ENCODE measurements at regions of chr13 and their contacts with region 1.

Region 1: GRCh38 chr13:106536244-106537034 is 977 bp upstream of the EFNB2 start:
- DNase-seq: peak; percentile 73
- H3K4me3 ChIP-seq: peak overlapping the region; percentile 61 to 65 (median 63)
- H3K27ac ChIP-seq: peak overlapping the region; percentile 45
- H3K4me1 ChIP-seq: peaks cover 11% of the 10 kb centered on the region
- H3K27me3 ChIP-seq: no peaks in the 10 kb centered on the region
- CTCF ChIP-seq: peak; percentile 93 to 99

Region 2: GRCh38 chr13:104571161-104571892 is 1965.1 kb before region 1 on chr13:
- CTCF ChIA-PET with region 1: no interaction called
- dilution Hi-C with region 1: no loop called
- in situ Hi-C with region 1: loop called (anchors 10 to 25 kb)
- intact Hi-C with region 1: loop called (anchors 1 kb)
- DNase-seq: peak; percentile 90
- H3K4me3 ChIP-seq: no peak overlapping the region
- H3K27ac ChIP-seq: no peak overlapping the region
- H3K4me1 ChIP-seq: peaks cover 12% of the 10 kb centered on the region
- H3K27me3 ChIP-seq: no peaks in the 10 kb centered on the region
- CTCF ChIP-seq: peak; percentile 54 to 82

Region 3: DNA sequence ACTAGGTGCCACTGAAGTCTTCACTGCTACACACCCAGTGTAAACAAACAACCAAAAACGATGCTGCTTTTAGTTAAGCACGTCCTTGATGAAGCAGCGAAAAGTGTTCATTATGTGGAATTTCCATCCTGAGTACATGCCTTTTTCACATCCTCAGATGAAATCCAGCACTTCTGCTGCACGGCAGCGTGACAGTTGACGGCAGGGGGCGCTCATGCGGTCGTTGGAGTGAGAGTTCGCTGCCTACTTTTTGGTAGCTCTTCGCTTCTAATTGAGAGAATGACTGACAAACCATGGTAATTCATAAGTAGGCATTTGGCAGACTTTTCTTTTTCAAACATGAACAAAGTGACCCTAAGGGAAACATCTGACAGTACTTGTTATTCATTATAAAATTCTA is 1125.8 kb before region 1 on chr13:
- CTCF ChIA-PET with region 1: no interaction called
- dilution Hi-C with region 1: no loop called
- in situ Hi-C with region 1: loop called in 1 of 2 experiments (anchors 25 kb)
- intact Hi-C with region 1: loop called (anchors 2 kb)
- DNase-seq: peak; percentile 53
- H3K4me3 ChIP-seq: no peak overlapping the region
- H3K27ac ChIP-seq: no peak overlapping the region
- H3K4me1 ChIP-seq: no peaks in the 10 kb centered on the region
- H3K27me3 ChIP-seq: no peaks in the 10 kb centered on the region
- CTCF ChIP-seq: peak; percentile 91

Region 4: GRCh38 chr13:105702441-105702840 is 834.0 kb before region 1 on chr13:
- CTCF ChIA-PET with region 1: no interaction called
- dilution Hi-C with region 1: no loop called
- in situ Hi-C with region 1: no loop called
- intact Hi-C with region 1: loop called (anchors 10 kb)
- DNase-seq: no peak
- H3K4me3 ChIP-seq: no peak overlapping the region
- H3K27ac ChIP-seq: no peak overlapping the region
- H3K4me1 ChIP-seq: no peaks in the 10 kb centered on the region
- H3K27me3 ChIP-seq: no peaks in the 10 kb centered on the region
- CTCF ChIP-seq: no peak

Region 5: GRCh38 chr13:105979131-105980011 is 557.1 kb before region 1 on chr13:
- CTCF ChIA-PET with region 1: no interaction called
- dilution Hi-C with region 1: no loop called
- in situ Hi-C with region 1: no loop called
- intact Hi-C with region 1: loop called (anchors 5 kb)
- DNase-seq: peak; percentile 85
- H3K4me3 ChIP-seq: peak overlapping the region; percentile 5 to 26 (median 14)
- H3K27ac ChIP-seq: peak overlapping the region; percentile 88
- H3K4me1 ChIP-seq: peaks cover 32% of the 10 kb centered on the region
- H3K27me3 ChIP-seq: no peaks in the 10 kb centered on the region
- CTCF ChIP-seq: no peak

Region 6: GRCh38 chr13:106156468-106156867 is 380.0 kb before region 1 on chr13:
- CTCF ChIA-PET with region 1: no interaction called
- dilution Hi-C with region 1: no loop called
- in situ Hi-C with region 1: no loop called
- intact Hi-C with region 1: loop called (anchors 2 kb)
- DNase-seq: peak; percentile 99
- H3K4me3 ChIP-seq: no peak overlapping the region
- H3K27ac ChIP-seq: peak overlapping the region; percentile 98
- H3K4me1 ChIP-seq: peaks cover 62% of the 10 kb centered on the region
- H3K27me3 ChIP-seq: no peaks in the 10 kb centered on the region
- CTCF ChIP-seq: no peak